B cell (primary cell): ENCODE measurements at regions of chr15 and their contacts with region 1.

Region 1: GRCh38 chr15:45022871-45023658 is at the start of gene SORD:
- DNase-seq: peak; percentile 89
- ATAC-seq: peak; percentile 100
- H3K4me3 ChIP-seq: peak within 1 kb of the TSS; percentile 51 to 92 (median 90)
- H3K4me3 Mint-ChIP-seq: peak within 1 kb of the TSS; percentile 92
- H3K27ac ChIP-seq: peak within 1 kb of the TSS; percentile 50 to 72
- H3K27ac Mint-ChIP-seq: peak within 1 kb of the TSS; percentile 78
- H3K4me1 ChIP-seq: peaks cover 12 to 16% of the 10 kb centered on the region in 2 donors
- H3K4me1 Mint-ChIP-seq: peaks cover 28% of the 10 kb centered on the region
- H3K27me3 ChIP-seq: no peaks in the 10 kb centered on the region
- H3K27me3 Mint-ChIP-seq: peaks cover 18% of the 10 kb centered on the region
- CTCF ChIP-seq: no peak
- total RNA-seq, gene SORD: 24.3 and 25.8 TPM in 2 replicates

Region 2: DNA sequence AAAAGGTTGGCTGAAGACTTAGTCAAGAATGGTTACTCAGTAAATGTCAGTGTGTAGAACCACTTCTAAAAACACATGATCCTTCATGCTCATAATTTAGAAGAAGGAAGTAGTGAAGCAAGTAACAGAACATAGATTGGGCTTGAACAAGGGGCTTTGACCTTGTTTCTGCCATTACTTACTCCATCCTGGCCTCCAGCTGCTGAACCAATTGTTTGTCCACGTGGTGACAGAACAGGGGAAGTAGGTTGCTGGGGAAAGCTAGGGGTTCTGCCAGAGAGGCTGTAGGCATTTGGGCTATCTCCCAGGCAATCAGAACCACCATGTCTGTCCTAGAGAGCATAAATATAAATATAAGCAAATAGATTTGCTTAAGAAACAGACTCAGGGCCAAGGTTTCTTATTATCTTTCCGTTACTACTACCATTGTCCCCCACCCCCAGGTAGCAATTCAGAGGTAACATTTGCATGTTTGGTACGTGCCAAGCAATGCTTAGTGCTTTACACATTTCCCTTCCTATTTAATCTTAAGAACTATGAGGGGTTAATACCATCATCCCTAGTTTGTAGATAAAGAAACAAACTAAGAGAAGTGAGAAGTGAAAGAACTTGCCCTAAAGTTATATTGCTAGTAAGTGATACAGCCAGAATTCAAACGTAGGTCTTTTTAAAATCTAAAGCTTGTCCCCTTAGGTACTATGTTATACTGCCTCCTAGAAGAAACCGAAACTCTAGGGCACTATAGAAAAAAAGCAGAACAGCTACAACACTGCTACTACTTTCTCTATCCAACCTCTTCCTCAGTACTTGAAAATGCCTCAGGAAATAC is 356.6 kb before region 1 on chr15:
- CTCF ChIA-PET with region 1: no interaction called
- POLR2A ChIA-PET with region 1: no interaction called
- intact Hi-C with region 1: no loop called
- DNase-seq: peak; percentile 73
- ATAC-seq: peak; percentile 6
- H3K4me3 ChIP-seq: peak overlapping the region in 3 of 5 experiments; percentile 12 to 62 (median 28)
- H3K4me3 Mint-ChIP-seq: peak overlapping the region; percentile 78
- H3K27ac ChIP-seq: peak overlapping the region; percentile 72 to 96
- H3K27ac Mint-ChIP-seq: peak overlapping the region; percentile 96
- H3K4me1 ChIP-seq: peaks cover 76 to 85% of the 10 kb centered on the region in 2 donors
- H3K4me1 Mint-ChIP-seq: peaks cover 69% of the 10 kb centered on the region
- H3K27me3 ChIP-seq: no peaks in the 10 kb centered on the region
- H3K27me3 Mint-ChIP-seq: no peaks in the 10 kb centered on the region
- CTCF ChIP-seq: no peak

Region 3: DNA sequence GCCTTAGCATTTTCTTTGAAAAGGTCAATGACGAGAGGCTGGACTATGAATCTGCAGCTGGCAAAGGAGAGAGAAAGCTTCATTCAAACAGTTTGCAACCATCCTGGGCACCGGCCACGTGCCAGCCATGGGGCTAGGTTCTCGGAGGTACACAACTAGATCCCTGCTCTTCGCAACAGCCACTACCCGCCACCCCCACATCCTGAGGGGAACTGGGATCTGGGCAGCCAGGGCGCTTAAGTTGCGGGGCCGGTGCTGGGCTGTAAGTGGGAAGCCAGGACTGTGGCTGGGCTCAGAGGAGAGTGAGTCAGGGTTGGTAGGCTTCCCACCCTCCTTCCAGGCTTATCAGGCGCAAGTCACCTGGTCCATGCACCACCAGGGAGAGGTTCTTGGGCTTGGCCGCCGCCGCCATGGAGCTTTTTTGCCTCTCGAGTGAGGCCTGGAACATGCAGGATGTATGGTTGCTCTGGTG is 161.6 kb before region 1 on chr15:
- CTCF ChIA-PET with region 1: no interaction called
- POLR2A ChIA-PET with region 1: no interaction called
- intact Hi-C with region 1: loop called (anchors 5 kb)
- DNase-seq: no peak
- ATAC-seq: no peak
- H3K4me3 ChIP-seq: no peak overlapping the region
- H3K4me3 Mint-ChIP-seq: no peak overlapping the region
- H3K27ac ChIP-seq: no peak overlapping the region
- H3K27ac Mint-ChIP-seq: no peak overlapping the region
- H3K4me1 ChIP-seq: no peaks in the 10 kb centered on the region
- H3K4me1 Mint-ChIP-seq: no peaks in the 10 kb centered on the region
- H3K27me3 ChIP-seq: no peaks in the 10 kb centered on the region
- H3K27me3 Mint-ChIP-seq: no peaks in the 10 kb centered on the region
- CTCF ChIP-seq: no peak

Region 4: GRCh38 chr15:45187894-45188830 is 165.1 kb after region 1 on chr15 and contains the start of gene SHF:
- CTCF ChIA-PET with region 1: no interaction called
- POLR2A ChIA-PET with region 1: no interaction called
- intact Hi-C with region 1: loop called (anchors 5 kb)
- DNase-seq: peak; percentile 87
- ATAC-seq: peak; percentile 79
- H3K4me3 ChIP-seq: peak within 1 kb of the TSS; percentile 32 to 98 (median 77)
- H3K4me3 Mint-ChIP-seq: peak within 1 kb of the TSS; percentile 91
- H3K27ac ChIP-seq: peak within 1 kb of the TSS; percentile 73 to 77
- H3K27ac Mint-ChIP-seq: peak within 1 kb of the TSS; percentile 78
- H3K4me1 ChIP-seq: peaks cover 0 to 15% of the 10 kb centered on the region in 2 donors
- H3K4me1 Mint-ChIP-seq: peaks cover 20% of the 10 kb centered on the region
- H3K27me3 ChIP-seq: no peaks in the 10 kb centered on the region
- H3K27me3 Mint-ChIP-seq: peaks cover 7% of the 10 kb centered on the region
- CTCF ChIP-seq: no peak
- total RNA-seq, gene SHF: 15.4 and 16.9 TPM in 2 replicates

Region 5: DNA sequence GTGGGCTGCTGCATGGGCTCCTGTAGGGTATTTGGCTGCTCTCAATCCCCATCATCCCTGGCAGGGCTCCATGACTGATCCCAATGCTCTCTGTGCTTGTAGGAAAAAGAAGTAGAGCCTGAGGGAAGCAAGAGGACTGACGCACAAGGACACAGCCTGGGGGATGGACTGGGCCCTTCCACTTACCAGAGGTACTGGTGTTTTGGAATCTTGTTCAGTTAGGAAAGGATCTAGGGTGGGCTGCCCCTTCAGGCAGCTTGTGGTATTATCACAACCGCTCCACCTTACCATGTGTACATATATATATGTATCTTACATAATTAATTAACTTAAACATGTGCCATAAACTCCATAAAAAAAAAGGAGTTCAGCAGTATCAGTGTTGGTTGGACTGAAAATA is 230.3 kb after region 1 on chr15:
- CTCF ChIA-PET with region 1: no interaction called
- POLR2A ChIA-PET with region 1: no interaction called
- intact Hi-C with region 1: no loop called
- DNase-seq: no peak
- ATAC-seq: no peak
- H3K4me3 ChIP-seq: no peak overlapping the region
- H3K4me3 Mint-ChIP-seq: no peak overlapping the region
- H3K27ac ChIP-seq: no peak overlapping the region
- H3K27ac Mint-ChIP-seq: no peak overlapping the region
- H3K4me1 ChIP-seq: no peaks in the 10 kb centered on the region
- H3K4me1 Mint-ChIP-seq: no peaks in the 10 kb centered on the region
- H3K27me3 ChIP-seq: no peaks in the 10 kb centered on the region
- H3K27me3 Mint-ChIP-seq: peaks cover 7% of the 10 kb centered on the region
- CTCF ChIP-seq: peak; percentile 57